Activated CD4-positive, alpha-beta memory T cell treated with anti-CD3 and anti-CD28 coated beads, Interleukin-2, amount 10 ng/mL, durations not matched to agents 7 days and 5 days (primary cell): ENCODE measurements at regions of chr1 and their contacts with region 1.

Region 1: GRCh38 chr1:222589462-222590302 is at the start of gene TAF1A:
- DNase-seq: peak; percentile 89
- H3K4me3 Mint-ChIP-seq: peak within 1 kb of the TSS; percentile 93
- H3K27ac Mint-ChIP-seq: peak within 1 kb of the TSS; percentile 87
- H3K4me1 Mint-ChIP-seq: peaks cover 42% of the 10 kb centered on the region
- H3K27me3 Mint-ChIP-seq: no peaks in the 10 kb centered on the region
- total RNA-seq, gene TAF1A: 9.1 to 10.0 TPM

Region 2: DNA sequence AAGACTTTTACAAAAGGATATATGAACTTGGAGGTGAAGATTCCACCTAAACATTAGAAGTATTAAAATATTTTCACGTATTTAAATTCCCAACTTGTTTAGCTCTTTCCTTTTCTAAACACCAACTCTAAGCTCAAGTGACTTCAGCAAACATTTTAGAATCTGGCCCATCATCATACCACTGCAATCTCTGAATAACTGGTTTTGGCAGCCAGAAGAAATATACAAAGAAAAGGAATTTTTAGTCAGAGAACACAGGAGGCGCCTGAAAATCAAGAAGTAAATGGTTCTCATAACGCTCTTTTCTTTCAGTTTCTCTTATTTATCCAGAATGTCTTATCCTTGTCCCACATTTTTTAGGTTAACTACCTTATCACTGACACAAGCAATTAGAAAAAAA is 10.4 kb before region 1 on chr1:
- CTCF ChIA-PET with region 1: no interaction called
- POLR2A ChIA-PET with region 1: no interaction called
- DNase-seq: no peak
- H3K4me3 Mint-ChIP-seq: no peak overlapping the region
- H3K27ac Mint-ChIP-seq: no peak overlapping the region
- H3K4me1 Mint-ChIP-seq: peaks cover 4% of the 10 kb centered on the region
- H3K27me3 Mint-ChIP-seq: no peaks in the 10 kb centered on the region

Region 3: GRCh38 chr1:222617367-222617951 is 27.8 kb after region 1 on chr1:
- CTCF ChIA-PET with region 1: interaction called, 7 read pairs
- POLR2A ChIA-PET with region 1: interaction called, 17 read pairs
- DNase-seq: peak; percentile 92
- H3K4me3 Mint-ChIP-seq: peak overlapping the region; percentile 77
- H3K27ac Mint-ChIP-seq: peak overlapping the region; percentile 67
- H3K4me1 Mint-ChIP-seq: peaks cover 24% of the 10 kb centered on the region
- H3K27me3 Mint-ChIP-seq: peaks cover 30% of the 10 kb centered on the region

Region 4: DNA sequence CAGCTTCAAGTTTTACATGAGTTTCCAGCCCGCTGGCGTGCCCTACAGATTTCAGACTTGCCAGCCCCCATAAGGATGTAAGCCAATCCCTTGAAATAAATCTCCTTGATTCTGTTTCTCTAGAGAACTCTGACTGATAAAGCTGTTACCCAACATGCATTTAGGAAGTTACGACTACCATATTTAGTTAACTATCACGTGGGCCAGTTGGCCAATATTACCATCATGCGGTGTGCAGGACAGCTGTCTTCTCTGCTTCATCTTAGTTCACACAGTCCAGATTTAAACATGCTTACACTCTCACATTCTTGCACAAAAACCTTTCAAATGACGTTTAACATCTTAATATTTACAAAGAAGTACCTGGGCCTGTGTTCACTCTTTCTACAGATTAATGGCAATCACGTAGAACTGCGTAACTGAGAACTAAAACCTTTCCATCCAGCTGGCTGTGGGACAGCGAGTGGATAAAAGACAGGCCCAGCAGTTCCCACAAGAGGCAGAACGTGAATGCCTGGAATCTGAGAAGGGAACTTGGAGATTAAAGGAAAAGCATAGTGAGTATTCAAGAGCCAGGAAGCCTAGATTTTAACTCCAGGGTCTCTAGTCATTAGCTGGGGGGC is 168.1 kb after region 1 on chr1:
- CTCF ChIA-PET with region 1: no interaction called
- POLR2A ChIA-PET with region 1: no interaction called
- DNase-seq: no peak
- H3K4me3 Mint-ChIP-seq: no peak overlapping the region
- H3K27ac Mint-ChIP-seq: no peak overlapping the region
- H3K4me1 Mint-ChIP-seq: no peaks in the 10 kb centered on the region
- H3K27me3 Mint-ChIP-seq: peaks cover 8% of the 10 kb centered on the region